ENCODE measurements at regions of chr16 and their contacts with region 1.

Region 1: DNA sequence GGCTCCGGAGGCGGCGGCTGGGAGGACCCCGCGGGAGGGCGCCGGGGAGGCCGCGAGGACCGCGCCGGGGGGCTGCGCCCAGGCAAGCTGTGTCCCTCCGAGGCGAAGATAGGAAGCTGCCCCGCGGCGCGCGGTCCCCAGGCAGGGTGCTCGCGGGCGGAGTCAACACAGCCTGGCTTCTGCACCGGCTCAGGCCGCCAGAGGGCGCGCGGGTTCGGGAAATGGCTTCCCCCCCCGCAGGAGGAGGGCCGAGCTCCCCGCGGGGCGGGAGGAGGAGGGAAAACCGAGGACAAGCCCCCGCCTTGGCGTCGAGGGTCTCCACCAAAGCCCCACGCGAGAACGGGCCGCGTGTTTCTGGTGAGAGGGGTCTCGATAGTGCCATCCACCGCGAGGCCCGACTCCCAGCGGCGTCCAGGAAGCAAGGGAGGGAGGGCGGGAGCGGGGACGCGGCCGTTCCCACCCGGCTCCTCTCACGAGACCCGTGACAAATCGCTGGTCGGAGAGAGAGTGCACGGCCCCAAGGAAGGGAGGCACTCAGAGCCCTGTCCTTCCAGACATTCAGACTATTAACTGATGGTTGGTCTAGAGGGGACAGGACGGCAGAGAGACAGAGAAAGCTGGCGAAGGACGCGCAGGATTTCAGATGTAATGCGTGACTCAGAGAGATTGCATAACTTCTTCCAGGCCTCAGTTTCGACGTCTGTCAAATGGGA is 64.4 kb upstream of the DNAJA2 start:
- DNase-seq: peak; percentile 90
- H3K4me3 Mint-ChIP-seq: peak overlapping the region; percentile 65
- H3K27ac Mint-ChIP-seq: no peak overlapping the region
- H3K4me1 Mint-ChIP-seq: peaks cover 8% of the 10 kb centered on the region
- H3K27me3 Mint-ChIP-seq: peaks cover 12% of the 10 kb centered on the region

Region 2: DNA sequence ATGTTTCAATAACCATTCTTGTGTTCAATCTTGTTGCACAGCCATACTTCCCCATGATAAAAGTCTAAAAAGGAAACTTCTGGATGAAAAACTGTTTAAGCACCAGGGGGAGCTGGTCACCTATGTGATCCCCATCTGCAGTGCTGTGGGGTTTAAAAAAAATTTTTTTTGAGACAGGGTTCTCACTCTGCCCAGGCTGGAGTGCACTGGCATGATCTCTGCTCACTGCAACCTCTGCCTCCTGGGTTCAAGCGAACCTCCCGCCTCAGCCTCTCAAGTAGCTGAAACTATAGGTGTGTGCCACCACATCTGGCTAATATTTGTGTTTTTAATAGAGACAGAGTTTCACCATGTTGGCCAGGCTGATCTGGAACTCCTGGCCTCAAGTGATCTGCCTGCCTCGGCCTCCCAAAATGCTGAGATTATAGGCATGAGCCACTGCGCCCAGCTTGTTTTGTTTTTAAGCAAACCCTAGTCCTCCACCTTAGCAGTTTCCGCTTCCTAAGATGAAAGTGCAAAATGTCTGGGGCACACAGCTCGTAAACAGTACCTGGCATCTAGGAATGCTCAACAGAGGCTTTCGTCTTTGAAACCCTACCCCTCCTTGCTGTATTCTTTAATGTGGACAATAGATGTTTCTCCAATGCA is 89.9 kb before region 1 on chr16:
- CTCF ChIA-PET with region 1: interaction called, 10 read pairs
- POLR2A ChIA-PET with region 1: interaction called, 3 read pairs
- DNase-seq: peak; percentile 43
- H3K4me3 Mint-ChIP-seq: no peak overlapping the region
- H3K27ac Mint-ChIP-seq: peak overlapping the region; percentile 59
- H3K4me1 Mint-ChIP-seq: peaks cover 32% of the 10 kb centered on the region
- H3K27me3 Mint-ChIP-seq: no peaks in the 10 kb centered on the region

Region 3: GRCh38 chr16:47019568-47019967 is 18.3 kb before region 1 on chr16:
- CTCF ChIA-PET with region 1: interaction called, 15 read pairs
- POLR2A ChIA-PET with region 1: no interaction called
- DNase-seq: no peak
- H3K4me3 Mint-ChIP-seq: no peak overlapping the region
- H3K27ac Mint-ChIP-seq: no peak overlapping the region
- H3K4me1 Mint-ChIP-seq: peaks cover 25% of the 10 kb centered on the region
- H3K27me3 Mint-ChIP-seq: peaks cover 6% of the 10 kb centered on the region

Region 4: DNA sequence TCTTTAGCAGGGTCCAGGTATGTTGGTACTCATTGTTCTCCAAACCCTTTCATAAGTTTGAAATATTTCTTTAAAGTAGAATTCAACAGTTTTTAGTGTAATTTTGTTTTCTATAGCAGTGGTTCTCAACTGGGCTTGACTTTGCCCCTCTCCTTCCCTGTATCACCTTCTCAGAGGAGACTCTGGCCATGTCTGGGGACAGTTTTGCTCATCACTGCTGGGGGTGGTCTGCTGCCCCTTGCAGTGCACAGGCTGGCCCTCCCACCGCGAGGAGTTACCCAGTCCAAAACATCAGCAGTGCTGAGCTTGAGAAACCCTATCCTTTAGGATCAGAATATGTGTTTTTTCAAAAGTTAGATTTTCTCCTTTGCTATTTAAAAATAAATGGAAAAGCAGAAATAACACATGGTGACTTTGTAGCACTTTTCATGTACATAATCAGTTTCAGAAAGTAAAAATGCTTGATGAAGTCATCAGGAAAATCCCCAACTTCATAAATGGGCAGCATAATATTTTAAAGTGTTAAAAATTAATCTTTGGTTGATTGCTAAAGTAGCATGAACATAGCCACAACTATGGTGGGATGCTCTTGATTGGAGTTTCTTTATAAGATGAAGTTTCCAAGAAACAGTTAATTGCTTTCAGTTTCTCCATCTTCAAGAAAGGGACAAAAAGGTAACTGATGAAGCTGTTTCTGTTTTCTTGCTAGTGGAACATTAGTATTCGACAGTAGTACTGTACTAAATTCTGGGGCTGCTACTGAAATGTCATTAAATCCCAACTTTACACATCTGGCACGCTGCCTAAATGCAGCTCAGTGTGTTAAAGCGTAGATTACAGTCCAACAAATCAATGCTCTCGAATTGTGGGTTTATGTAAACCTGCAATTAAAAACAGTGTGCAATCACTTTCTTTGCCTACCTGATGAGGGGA is 35.6 kb after region 1 on chr16:
- CTCF ChIA-PET with region 1: interaction called, 12 read pairs
- POLR2A ChIA-PET with region 1: no interaction called
- DNase-seq: no peak
- H3K4me3 Mint-ChIP-seq: no peak overlapping the region
- H3K27ac Mint-ChIP-seq: no peak overlapping the region
- H3K4me1 Mint-ChIP-seq: peaks cover 25% of the 10 kb centered on the region
- H3K27me3 Mint-ChIP-seq: no peaks in the 10 kb centered on the region

Region 5: GRCh38 chr16:47110939-47111338 is 73.0 kb after region 1 on chr16:
- CTCF ChIA-PET with region 1: interaction called, 11 read pairs
- POLR2A ChIA-PET with region 1: no interaction called
- DNase-seq: no peak
- H3K4me3 Mint-ChIP-seq: no peak overlapping the region
- H3K27ac Mint-ChIP-seq: no peak overlapping the region
- H3K4me1 Mint-ChIP-seq: peaks cover 24% of the 10 kb centered on the region
- H3K27me3 Mint-ChIP-seq: no peaks in the 10 kb centered on the region

Region 6: GRCh38 chr16:48164907-48165726 is 1127.2 kb after region 1 on chr16:
- CTCF ChIA-PET with region 1: interaction called, 12 read pairs
- POLR2A ChIA-PET with region 1: no interaction called
- DNase-seq: peak; percentile 70
- H3K4me3 Mint-ChIP-seq: no peak overlapping the region
- H3K27ac Mint-ChIP-seq: no peak overlapping the region
- H3K4me1 Mint-ChIP-seq: peaks cover 12% of the 10 kb centered on the region
- H3K27me3 Mint-ChIP-seq: peaks cover 4% of the 10 kb centered on the region